Activated CD4-positive, alpha-beta memory T cell treated with anti-CD3 and anti-CD28 coated beads for 36 hours (primary cell): ENCODE measurements at regions of chr19 and their contacts with region 1.

Region 1: GRCh38 chr19:3762501-3763459 is at the start of gene MRPL54:
- DNase-seq: peak; percentile 100
- H3K4me3 Mint-ChIP-seq: peak within 1 kb of the TSS; percentile 99
- H3K27ac Mint-ChIP-seq: peak within 1 kb of the TSS; percentile 99
- H3K4me1 Mint-ChIP-seq: peaks cover 34% of the 10 kb centered on the region
- H3K27me3 Mint-ChIP-seq: no peaks in the 10 kb centered on the region
- total RNA-seq, gene MRPL54: 63.2 to 65.2 TPM

Region 2: DNA sequence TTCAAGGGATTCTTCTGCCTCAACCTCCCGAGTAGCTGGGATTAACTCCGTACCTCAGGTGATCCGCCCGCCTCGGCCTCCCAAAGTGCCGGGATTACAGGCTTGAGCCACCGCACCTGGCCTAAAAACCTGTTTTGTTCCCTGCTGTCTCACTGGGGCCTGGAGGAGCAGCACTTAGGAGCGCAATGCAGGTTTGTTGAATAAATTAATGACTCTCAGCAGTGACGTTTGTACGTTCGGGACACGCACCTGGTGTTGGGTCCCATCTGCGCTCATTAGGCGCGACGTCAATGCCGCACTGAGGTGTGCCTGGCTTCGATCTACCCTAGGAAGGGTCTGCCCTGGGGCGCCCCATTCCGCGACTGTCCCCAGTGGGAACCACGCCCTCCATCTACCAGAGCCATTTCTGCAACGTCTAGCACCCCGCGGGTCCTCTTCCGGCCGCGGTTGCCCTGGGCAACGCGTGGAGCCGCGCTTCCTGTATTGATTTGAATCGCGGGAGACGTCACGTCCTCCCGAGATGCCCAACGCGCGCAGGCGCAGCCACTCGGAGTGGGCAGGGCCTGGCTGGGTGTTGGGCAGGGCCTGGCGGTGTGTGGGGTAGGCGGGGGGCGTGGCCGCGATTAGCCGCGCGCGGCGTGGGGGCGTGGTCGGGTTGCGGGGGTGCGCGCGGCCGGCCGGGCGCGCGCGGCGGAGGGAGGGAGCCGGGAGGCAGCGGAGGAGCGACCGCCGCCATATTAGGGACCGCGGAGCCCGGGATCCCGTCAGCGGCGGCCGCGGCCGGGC is 257.0 kb before region 1 on chr19 and contains the start of gene FZR1:
- CTCF ChIA-PET with region 1: no interaction called
- POLR2A ChIA-PET with region 1: interaction called, 3 read pairs
- intact Hi-C with region 1: loop called (anchors 1 kb)
- DNase-seq: peak; percentile 100
- H3K4me3 Mint-ChIP-seq: peak within 1 kb of the TSS; percentile 93
- H3K27ac Mint-ChIP-seq: peak within 1 kb of the TSS; percentile 93
- H3K4me1 Mint-ChIP-seq: peaks cover 43% of the 10 kb centered on the region
- H3K27me3 Mint-ChIP-seq: no peaks in the 10 kb centered on the region
- total RNA-seq, gene FZR1: 43.5 to 46.9 TPM

Region 3: DNA sequence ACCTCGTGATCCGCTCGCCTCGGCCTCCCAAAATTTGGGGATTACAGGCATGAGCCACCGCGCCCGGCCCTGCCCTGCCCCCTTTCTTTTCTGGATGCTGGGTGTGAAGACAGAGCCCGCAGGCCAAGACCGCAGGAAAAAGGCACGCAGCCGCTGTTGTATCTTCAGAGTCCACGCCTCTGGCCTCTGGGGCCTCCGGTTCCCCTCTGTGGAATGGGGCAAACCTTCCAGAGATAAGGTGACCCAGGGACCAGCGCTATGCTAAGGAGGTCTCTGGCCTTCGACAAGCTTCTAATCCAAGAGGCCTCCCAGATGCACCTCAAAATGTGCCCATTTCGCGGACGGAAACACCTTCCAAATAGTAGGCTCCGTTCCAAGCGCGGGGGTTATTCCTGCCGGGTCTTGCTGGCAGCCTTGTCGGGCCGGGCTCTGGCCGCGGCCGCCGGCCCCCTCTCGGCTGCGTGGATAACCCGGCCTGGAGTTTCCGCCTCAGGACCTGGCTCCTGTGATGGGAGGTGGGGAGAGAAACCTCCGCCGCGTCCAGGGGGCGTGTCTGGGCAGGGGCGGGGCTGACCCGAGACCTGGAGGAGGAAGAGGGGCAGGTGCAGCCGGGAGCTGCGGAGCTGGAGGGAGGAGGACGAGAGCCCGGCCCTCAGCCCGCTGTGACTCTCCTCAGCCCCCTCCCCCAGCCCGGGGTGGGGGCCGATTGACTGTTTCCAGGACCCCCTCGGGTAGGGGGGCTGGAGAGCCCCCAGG is 41.5 kb before region 1 on chr19:
- CTCF ChIA-PET with region 1: interaction called, 3 read pairs
- POLR2A ChIA-PET with region 1: no interaction called
- intact Hi-C with region 1: loop called (anchors 2 kb)
- DNase-seq: peak; percentile 94
- H3K4me3 Mint-ChIP-seq: peak overlapping the region; percentile 55
- H3K27ac Mint-ChIP-seq: no peak overlapping the region
- H3K4me1 Mint-ChIP-seq: peaks cover 7% of the 10 kb centered on the region
- H3K27me3 Mint-ChIP-seq: peaks cover 4% of the 10 kb centered on the region

Region 4: DNA sequence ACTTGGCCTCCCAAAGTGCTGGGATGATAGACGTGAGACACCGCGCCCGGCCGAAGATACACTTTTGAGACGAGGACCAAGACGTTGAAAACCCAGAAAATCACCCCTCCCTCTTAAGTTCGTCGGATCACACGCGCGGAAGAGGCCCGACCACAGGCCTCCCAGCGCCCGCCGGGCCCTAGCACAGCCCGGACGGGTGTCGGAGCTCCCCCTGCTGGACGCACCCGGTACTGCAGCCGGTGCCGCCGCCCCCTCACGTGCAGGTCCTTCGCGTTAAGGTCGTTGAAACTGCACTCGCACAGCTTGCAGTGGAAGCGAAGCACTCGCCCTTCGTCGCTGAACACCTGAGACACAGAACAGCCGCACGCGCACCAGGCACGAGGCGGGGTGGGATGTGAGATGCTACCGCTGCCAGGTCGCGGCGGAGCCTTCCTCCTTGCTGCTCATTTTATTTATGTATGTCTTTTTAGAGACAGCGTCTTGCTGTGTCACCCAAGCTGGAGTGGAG is 59.1 kb after region 1 on chr19:
- CTCF ChIA-PET with region 1: interaction called, 43 read pairs
- POLR2A ChIA-PET with region 1: interaction called, 13 read pairs
- intact Hi-C with region 1: loop called (anchors 1 kb)
- DNase-seq: peak; percentile 94
- H3K4me3 Mint-ChIP-seq: peak overlapping the region; percentile 23
- H3K27ac Mint-ChIP-seq: no peak overlapping the region
- H3K4me1 Mint-ChIP-seq: peaks cover 17% of the 10 kb centered on the region
- H3K27me3 Mint-ChIP-seq: no peaks in the 10 kb centered on the region

Region 5: DNA sequence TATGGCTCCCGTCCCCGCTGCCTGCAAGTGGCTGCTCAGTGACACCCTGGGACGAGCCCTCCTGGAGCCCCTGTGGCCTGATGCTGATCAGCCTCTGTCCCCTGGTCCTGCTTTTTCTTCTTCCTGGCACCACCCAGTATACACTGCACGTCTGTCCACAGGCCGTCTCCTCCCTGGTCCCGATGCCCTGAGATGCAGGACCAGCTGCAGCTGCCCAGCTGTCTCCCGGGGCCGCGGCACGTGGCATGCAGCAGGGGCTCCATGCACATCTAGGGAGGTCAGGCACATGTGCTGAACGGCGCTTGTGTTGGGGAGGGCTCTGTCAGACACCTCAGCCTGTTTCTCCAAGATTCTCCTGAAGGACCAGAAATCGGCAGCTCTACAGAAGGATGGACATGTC is 75.9 kb after region 1 on chr19:
- CTCF ChIA-PET with region 1: no interaction called
- POLR2A ChIA-PET with region 1: no interaction called
- intact Hi-C with region 1: no loop called
- DNase-seq: no peak
- H3K4me3 Mint-ChIP-seq: no peak overlapping the region
- H3K27ac Mint-ChIP-seq: no peak overlapping the region
- H3K4me1 Mint-ChIP-seq: no peaks in the 10 kb centered on the region
- H3K27me3 Mint-ChIP-seq: no peaks in the 10 kb centered on the region

Region 6: DNA sequence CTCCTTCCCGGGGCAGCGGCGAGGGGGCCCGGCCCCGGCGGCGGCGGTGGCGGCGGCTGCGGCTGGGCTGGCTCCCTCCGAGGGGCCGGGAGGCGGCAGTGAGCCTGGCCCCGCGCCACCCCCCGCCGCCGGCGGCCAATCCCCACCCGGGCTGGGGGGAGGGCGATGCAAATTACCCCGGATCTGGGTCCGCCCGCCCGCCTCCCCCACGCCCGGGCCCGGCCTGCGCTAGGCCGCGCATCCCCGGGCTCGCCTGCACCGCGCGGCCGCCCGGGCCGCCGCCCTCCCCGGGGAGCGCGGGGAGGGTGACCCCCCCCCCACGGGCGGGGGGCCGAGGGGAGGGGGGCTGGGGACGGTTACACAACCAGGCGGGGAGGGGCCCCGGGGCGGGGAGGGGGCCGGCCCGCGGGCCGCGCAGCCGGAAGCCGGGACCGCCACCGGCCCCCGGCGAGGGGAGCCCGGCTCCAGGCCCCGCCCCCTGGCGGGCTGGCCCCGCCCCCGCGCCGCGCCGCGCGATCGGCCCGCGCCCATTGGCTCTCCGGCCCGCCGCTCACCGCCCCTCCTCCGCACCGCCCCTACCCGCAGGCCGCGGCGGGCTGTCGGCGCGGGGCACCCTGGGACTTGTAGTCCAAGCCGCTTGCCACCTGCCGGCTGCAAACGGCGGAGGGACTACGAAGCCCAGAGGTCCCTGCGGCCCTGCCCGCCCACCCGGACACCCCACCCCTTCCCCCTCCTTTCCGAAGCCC is 302.8 kb after region 1 on chr19:
- CTCF ChIA-PET with region 1: no interaction called
- POLR2A ChIA-PET with region 1: no interaction called
- intact Hi-C with region 1: loop called (anchors 5 kb)
- DNase-seq: peak; percentile 97
- H3K4me3 Mint-ChIP-seq: peak overlapping the region; percentile 57
- H3K27ac Mint-ChIP-seq: no peak overlapping the region
- H3K4me1 Mint-ChIP-seq: peaks cover 41% of the 10 kb centered on the region
- H3K27me3 Mint-ChIP-seq: no peaks in the 10 kb centered on the region